Activated CD4-positive, alpha-beta T cell treated with anti-CD3 and anti-CD28 coated beads for 36 hours (primary cell): ENCODE measurements at regions of chr1 and their contacts with region 1.

Region 1: GRCh38 chr1:31938174-31938950 is at the start of gene PTP4A2:
- DNase-seq: peak; percentile 93
- ATAC-seq: peak; percentile 63
- H3K4me3 Mint-ChIP-seq: peak within 1 kb of the TSS; percentile 91
- H3K27ac Mint-ChIP-seq: peak within 1 kb of the TSS; percentile 99
- H3K4me1 Mint-ChIP-seq: peaks cover 63% of the 10 kb centered on the region
- H3K27me3 Mint-ChIP-seq: no peaks in the 10 kb centered on the region
- total RNA-seq, gene PTP4A2: 279 to 314 TPM

Region 2: GRCh38 chr1:31644560-31645273 is 293.6 kb before region 1 on chr1 and contains the start of gene PEF1:
- CTCF ChIA-PET with region 1: no interaction called
- POLR2A ChIA-PET with region 1: interaction called, 4 read pairs
- intact Hi-C with region 1: loop called in 1 of 2 experiments (anchors 1 kb)
- DNase-seq: peak; percentile 100
- ATAC-seq: peak; percentile 91
- H3K4me3 Mint-ChIP-seq: peak within 1 kb of the TSS; percentile 95
- H3K27ac Mint-ChIP-seq: peak within 1 kb of the TSS; percentile 100
- H3K4me1 Mint-ChIP-seq: peaks cover 23% of the 10 kb centered on the region
- H3K27me3 Mint-ChIP-seq: no peaks in the 10 kb centered on the region
- total RNA-seq, gene PEF1: 48.8 to 59.3 TPM

Region 3: GRCh38 chr1:31831397-31832378 is 106.7 kb before region 1 on chr1:
- CTCF ChIA-PET with region 1: interaction called, 4 read pairs
- POLR2A ChIA-PET with region 1: no interaction called
- intact Hi-C with region 1: loop called in 1 of 2 experiments (anchors 5 kb)
- DNase-seq: no peak
- ATAC-seq: no peak
- H3K4me3 Mint-ChIP-seq: no peak overlapping the region
- H3K27ac Mint-ChIP-seq: no peak overlapping the region
- H3K4me1 Mint-ChIP-seq: peaks cover 20% of the 10 kb centered on the region
- H3K27me3 Mint-ChIP-seq: no peaks in the 10 kb centered on the region

Region 4: DNA sequence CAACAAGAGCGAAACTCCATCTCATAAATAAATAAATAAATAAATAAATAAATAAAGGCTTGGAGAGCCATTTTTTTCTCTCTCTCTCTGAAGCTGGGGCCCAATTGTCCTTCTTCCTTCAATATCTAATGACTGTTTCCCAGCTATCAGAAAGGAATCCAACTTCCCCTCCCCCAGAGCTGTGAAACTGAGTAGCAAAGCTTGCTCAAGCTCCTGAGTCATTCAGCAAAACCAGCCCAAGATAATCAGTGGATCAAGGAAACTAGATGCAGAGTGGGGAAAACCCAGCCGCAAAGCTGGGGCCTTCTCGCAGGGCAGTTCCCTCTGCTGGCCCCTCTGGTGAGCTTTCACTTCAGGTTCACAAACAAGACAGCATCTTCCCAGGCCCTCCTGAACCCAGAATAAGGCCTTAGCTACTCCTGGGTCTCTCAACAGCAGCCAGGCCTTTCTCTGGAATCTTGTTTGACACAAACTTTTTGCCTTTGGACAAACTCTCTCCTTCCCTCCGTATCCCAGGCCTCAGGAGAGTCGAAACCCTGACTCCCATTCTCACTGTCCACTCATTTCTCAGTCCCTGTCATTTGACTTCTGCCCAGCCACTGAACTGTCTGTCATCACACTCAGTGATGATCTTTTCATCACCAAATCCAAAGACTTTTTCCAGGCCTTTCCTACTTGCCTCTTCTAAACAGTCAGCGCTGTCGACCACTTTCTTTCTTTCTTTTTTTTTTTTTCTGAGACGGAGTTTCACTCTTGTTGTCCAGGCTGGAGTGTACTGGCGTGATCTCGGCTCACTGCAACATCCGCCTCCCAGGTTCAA is 17.8 kb after region 1 on chr1:
- CTCF ChIA-PET with region 1: interaction called, 175 read pairs
- POLR2A ChIA-PET with region 1: interaction called, 41 read pairs
- intact Hi-C with region 1: loop called (anchors 1 kb)
- DNase-seq: peak; percentile 93
- ATAC-seq: peak; percentile 83
- H3K4me3 Mint-ChIP-seq: peak overlapping the region; percentile 60
- H3K27ac Mint-ChIP-seq: peak overlapping the region; percentile 95
- H3K4me1 Mint-ChIP-seq: peaks cover 81% of the 10 kb centered on the region
- H3K27me3 Mint-ChIP-seq: no peaks in the 10 kb centered on the region

Region 5: GRCh38 chr1:32266921-32267591 is 328.7 kb after region 1 on chr1:
- CTCF ChIA-PET with region 1: no interaction called
- POLR2A ChIA-PET with region 1: no interaction called
- intact Hi-C with region 1: loop called in 1 of 2 experiments (anchors 10 kb)
- DNase-seq: peak; percentile 49
- ATAC-seq: peak; percentile 40
- H3K4me3 Mint-ChIP-seq: peak overlapping the region; percentile 36
- H3K27ac Mint-ChIP-seq: peak overlapping the region; percentile 97
- H3K4me1 Mint-ChIP-seq: peaks cover 60% of the 10 kb centered on the region
- H3K27me3 Mint-ChIP-seq: no peaks in the 10 kb centered on the region

Region 6: GRCh38 chr1:32413507-32414185 is 475.3 kb after region 1 on chr1:
- CTCF ChIA-PET with region 1: no interaction called
- POLR2A ChIA-PET with region 1: no interaction called
- intact Hi-C with region 1: no loop called
- DNase-seq: peak; percentile 83
- ATAC-seq: peak; percentile 88
- H3K4me3 Mint-ChIP-seq: no peak overlapping the region
- H3K27ac Mint-ChIP-seq: peak overlapping the region; percentile 62
- H3K4me1 Mint-ChIP-seq: peaks cover 2% of the 10 kb centered on the region
- H3K27me3 Mint-ChIP-seq: peaks cover 3% of the 10 kb centered on the region